Heart left ventricle (tissue), 16 donors: ENCODE measurements at regions of chr16 and their contacts with region 1.

Region 1: DNA sequence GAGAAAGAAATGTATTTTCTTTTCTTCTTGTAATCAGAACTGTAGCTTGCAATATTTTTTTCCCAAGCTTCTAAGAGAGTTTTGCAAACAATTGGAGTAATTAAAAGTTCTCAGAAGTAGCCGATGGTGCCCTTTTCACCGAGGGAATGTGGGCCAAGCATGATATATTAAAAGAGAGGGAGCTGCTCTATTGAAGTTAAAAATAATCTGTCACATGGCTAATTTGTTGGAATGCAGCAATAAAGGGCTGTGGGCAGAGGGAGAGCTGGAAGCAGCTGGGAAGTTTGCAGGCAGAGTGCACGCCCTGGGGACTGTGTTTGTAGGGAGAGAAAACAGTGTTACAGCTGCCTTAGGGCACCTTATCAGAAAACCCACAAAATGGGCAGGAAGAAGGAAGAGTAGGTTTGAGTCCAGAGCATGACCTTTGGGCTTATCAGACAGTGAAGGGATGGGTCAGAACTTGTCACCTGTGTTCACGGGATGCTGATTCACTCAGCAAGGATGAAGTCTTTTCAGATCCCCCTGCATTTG is 18.5 kb upstream of the TERF2 start:
- DNase-seq: peak in 2 of 5 donors; percentile 35 to 45
- ATAC-seq: peak; percentile 71 to 88 (median 78)
- H3K4me3 ChIP-seq: peak overlapping the region in 2 of 12 donors; percentile 8 to 22
- H3K27ac ChIP-seq: peak overlapping the region; percentile 45 to 86 (median 76)
- H3K4me1 ChIP-seq: peaks cover 0 to 36% (median 12%) of the 10 kb centered on the region in 12 donors
- H3K27me3 ChIP-seq: no peaks in the 10 kb centered on the region
- CTCF ChIP-seq: no peak
- POLR2A ChIP-seq: no peak

Region 2: DNA sequence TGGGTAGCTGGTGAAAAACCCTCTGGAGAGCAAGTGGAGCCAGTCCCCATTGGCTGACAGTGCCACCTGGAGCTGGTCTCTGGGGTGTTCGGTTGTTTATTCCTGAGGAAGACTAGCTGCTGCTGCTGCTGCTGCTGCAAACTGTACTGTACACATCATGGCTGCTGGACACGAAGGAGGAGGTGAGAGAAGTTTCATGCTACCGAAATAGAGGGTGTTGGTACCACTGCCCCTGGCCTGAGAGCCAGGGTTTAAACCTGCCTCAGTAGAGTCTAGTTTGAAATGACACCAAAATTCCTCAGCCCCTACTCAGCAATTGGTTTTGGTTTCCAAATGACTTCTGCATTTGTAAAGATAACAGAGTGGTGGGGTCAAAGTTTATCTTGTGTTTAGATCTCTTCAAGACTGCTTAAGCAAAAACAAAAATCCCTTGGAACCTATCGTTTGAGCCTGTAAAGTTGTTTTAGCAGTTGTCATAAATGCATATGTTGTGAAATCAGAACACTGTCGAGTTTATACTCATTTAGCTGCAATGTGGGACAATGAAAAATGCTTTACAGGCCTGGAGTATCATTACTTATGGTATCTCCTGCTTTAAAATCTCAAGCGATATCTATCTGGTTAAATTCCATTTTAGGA is 60.9 kb after region 1 on chr16:
- intact Hi-C with region 1: loop called in 2 of 10 experiments (anchors 10 kb)
- DNase-seq: no peak
- ATAC-seq: no peak
- H3K4me3 ChIP-seq: no peak overlapping the region
- H3K27ac ChIP-seq: no peak overlapping the region
- H3K4me1 ChIP-seq: peaks cover 0 to 22% (median 2%) of the 10 kb centered on the region in 12 donors
- H3K27me3 ChIP-seq: peaks cover 0 to 18% (median 0%) of the 10 kb centered on the region in 9 donors
- CTCF ChIP-seq: no peak
- POLR2A ChIP-seq: no peak